HepG2 (cell line): ENCODE measurements at regions of chr10 and their contacts with region 1.

Region 1: DNA sequence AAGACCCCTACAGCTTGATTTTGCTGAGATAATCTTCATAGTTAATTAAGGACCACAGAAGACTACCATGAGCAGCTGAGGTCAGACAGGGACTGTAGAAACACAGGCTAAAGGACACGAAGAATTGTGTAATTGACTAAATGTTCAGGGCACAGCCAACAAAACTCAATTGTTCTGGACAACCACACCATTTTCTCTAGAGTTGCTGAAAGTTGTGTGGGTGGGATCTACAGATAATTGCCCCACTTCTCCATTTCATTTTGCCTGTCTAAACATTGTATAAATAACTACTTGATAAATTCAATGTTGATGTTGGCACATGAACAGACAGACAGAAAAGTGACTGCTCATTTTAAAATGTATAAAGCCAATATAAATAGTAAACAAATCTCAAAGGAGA is 39.0 kb upstream of the SLC16A12 start:
- DNase-seq: peak; percentile 48
- ATAC-seq: no peak; the same call in 2 of the 3 replicates
- H3K4me3 ChIP-seq: no peak overlapping the region
- H3K27ac ChIP-seq: no peak overlapping the region
- H3K4me1 ChIP-seq: peaks cover 20% of the 10 kb centered on the region
- H3K27me3 ChIP-seq: no peaks in the 10 kb centered on the region
- CTCF ChIP-seq: no peak
- EP300 ChIP-seq: peak in 1 of 2 experiments; percentile 7; a peak in 1 of 4 replicates
- POLR2A ChIP-seq: no peak
- RAD21 ChIP-seq: no peak

Region 2: GRCh38 chr10:89384474-89385340 is 189.7 kb before region 1 on chr10:
- CTCF ChIA-PET with region 1: no interaction called
- POLR2A ChIA-PET with region 1: no interaction called
- in situ Hi-C with region 1: no loop called
- intact Hi-C with region 1: loop called (anchors 1 kb)
- DNase-seq: no peak
- ATAC-seq: no peak
- H3K4me3 ChIP-seq: no peak overlapping the region
- H3K27ac ChIP-seq: no peak overlapping the region
- H3K4me1 ChIP-seq: no peaks in the 10 kb centered on the region
- H3K27me3 ChIP-seq: no peaks in the 10 kb centered on the region
- CTCF ChIP-seq: no peak
- EP300 ChIP-seq: no peak
- POLR2A ChIP-seq: no peak
- RAD21 ChIP-seq: no peak

Region 3: GRCh38 chr10:89668386-89669071 is 94.2 kb after region 1 on chr10:
- CTCF ChIA-PET with region 1: no interaction called
- POLR2A ChIA-PET with region 1: no interaction called
- in situ Hi-C with region 1: no loop called
- intact Hi-C with region 1: no loop called
- DNase-seq: peak; percentile 48
- ATAC-seq: peak; percentile 68
- H3K4me3 ChIP-seq: no peak overlapping the region
- H3K27ac ChIP-seq: no peak overlapping the region
- H3K4me1 ChIP-seq: peaks cover 40% of the 10 kb centered on the region
- H3K27me3 ChIP-seq: no peaks in the 10 kb centered on the region
- CTCF ChIP-seq: no peak
- EP300 ChIP-seq: no peak
- POLR2A ChIP-seq: no peak
- RAD21 ChIP-seq: no peak

Region 4: GRCh38 chr10:89701238-89702120 is 127.1 kb after region 1 on chr10 and contains the start of gene KIF20B:
- CTCF ChIA-PET with region 1: no interaction called
- POLR2A ChIA-PET with region 1: interaction called, 3 read pairs
- in situ Hi-C with region 1: no loop called
- intact Hi-C with region 1: loop called (anchors 2 kb)
- DNase-seq: peak; percentile 94
- ATAC-seq: peak; percentile 96
- H3K4me3 ChIP-seq: peak within 1 kb of the TSS; percentile 82 to 94 (median 93)
- H3K27ac ChIP-seq: peak within 1 kb of the TSS; percentile 91
- H3K4me1 ChIP-seq: peaks cover 74% of the 10 kb centered on the region
- H3K27me3 ChIP-seq: peaks cover 0 to 7% of the 10 kb centered on the region in 2 experiments; a peak in 1 of 5 replicates
- CTCF ChIP-seq: peak; percentile 81
- EP300 ChIP-seq: no peak
- POLR2A ChIP-seq: peak; percentile 94 to 95
- RAD21 ChIP-seq: peak; percentile 76
- total RNA-seq, gene KIF20B: 38.6 and 83.9 TPM in 2 replicates